GM12878 (cell line): ENCODE measurements at regions of chr16 and their contacts with region 1.

Region 1: DNA sequence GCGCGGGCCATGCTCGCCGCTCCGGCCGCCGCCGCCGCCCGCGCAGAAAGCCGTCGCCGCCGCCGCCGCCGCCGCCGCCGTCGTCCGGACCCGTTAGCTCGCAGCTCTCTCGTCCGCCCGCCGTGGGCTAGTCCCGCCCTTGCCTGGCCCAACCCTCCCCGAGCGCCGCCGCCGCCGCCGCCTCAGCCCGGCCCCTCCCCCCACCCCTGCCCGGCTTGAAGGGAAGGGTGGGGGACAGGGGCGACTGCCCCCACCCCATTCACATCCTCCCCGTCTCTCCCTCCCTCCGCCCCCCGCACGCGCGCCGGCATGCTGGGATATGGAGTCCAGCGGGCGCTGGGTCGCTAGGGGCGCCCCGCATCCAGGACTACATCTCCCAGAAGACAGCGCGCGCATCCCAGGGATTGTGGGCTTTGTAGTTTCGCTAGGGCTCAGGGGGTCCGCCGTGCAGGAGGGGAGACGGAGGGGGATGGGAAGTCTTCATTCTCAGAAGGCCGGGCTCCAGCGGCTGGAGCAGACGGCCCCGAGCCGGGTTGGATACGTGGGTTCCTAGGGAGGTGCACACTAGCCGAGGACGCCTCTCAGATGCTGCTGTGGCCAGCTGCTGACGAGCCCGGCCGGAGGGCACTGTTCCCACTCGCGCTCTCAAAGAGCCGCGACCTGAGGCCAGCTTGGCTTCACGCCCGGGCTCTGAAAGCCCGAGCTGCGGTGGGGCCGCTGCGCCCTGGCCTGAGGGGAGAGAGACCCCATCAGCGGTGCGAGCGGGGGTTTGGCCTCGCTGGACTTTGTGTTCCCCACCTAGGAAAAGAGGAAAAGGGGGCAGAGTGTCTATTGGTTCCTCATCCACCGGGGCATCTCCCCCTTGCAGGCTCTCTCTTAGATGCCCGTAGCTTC is at the start of gene ST3GAL2:
- DNase-seq: peak; percentile 74
- ATAC-seq: peak; percentile 91
- H3K4me3 ChIP-seq: peak within 1 kb of the TSS; percentile 88
- H3K27ac ChIP-seq: peak within 1 kb of the TSS; percentile 71
- H3K4me1 ChIP-seq: peaks cover 20% of the 10 kb centered on the region
- H3K27me3 ChIP-seq: no peaks in the 10 kb centered on the region
- CTCF ChIP-seq: 0 out of 6 replicates have a peak, but pooled peaks of 1 of the 3 experiments have one; percentile 2
- EP300 ChIP-seq: no peak
- POLR2A ChIP-seq: peak; percentile 67
- RAD21 ChIP-seq: no peak
- polyA plus RNA-seq, gene ST3GAL2: 0.95 to 1.4 TPM

Region 2: GRCh38 chr16:70402916-70403659 is 36.1 kb before region 1 on chr16:
- CTCF ChIA-PET with region 1: interaction called, 10 read pairs
- POLR2A ChIA-PET with region 1: interaction called, 17 read pairs
- RAD21 ChIA-PET with region 1: interaction called, 26 read pairs
- SMC1A ChIA-PET with region 1: interaction called, 37 read pairs
- in situ Hi-C with region 1: no loop called
- intact Hi-C with region 1: no loop called
- DNase-seq: no peak
- ATAC-seq: no peak
- H3K4me3 ChIP-seq: no peak overlapping the region
- H3K27ac ChIP-seq: peak overlapping the region; percentile 84
- H3K4me1 ChIP-seq: peaks cover 43% of the 10 kb centered on the region
- H3K27me3 ChIP-seq: no peaks in the 10 kb centered on the region; a peak in 1 of 4 replicates
- CTCF ChIP-seq: no peak
- EP300 ChIP-seq: no peak
- POLR2A ChIP-seq: no peak
- RAD21 ChIP-seq: no peak

Region 3: DNA sequence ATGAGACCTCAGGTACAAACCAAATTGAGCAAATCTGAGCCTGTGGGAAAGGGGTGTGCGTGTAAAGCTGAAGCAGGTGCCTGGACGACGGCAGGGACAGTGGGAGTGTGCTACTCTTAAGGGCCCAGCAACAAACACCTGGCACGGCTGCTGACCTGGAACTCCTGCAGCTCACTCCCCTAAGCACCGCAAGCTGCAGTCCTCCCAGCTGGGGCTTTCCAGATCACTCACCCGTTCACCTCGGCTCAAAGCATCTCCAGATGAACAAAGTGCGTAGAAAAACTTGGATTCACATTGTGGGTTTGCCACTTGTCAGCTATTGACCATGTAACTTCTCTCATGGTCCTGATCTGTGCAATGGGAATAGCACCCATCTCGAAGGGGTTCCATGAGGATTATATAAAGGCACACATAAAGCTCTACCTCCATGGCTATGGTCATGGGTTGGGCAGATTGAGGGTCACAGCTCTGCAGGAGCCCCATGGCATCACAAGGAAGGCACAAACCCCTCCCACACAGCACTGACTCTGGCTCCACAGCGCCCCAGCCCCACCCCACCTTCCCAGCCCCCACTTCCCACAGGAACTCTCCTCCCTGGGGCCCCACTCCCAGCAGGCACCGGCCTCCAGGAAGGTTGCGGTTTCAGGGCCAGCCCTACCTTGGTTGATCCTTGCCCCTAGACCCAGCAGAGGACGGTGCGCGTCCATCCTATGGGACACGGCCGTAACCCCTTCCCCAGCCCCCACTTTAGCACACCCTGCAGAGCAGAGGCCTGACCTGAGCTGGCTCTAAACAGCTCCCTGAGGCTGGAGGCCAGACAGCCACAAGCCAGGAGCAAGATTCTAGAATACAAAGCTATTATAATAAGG is 22.2 kb before region 1 on chr16:
- CTCF ChIA-PET with region 1: interaction called, 9 read pairs
- POLR2A ChIA-PET with region 1: interaction called, 24 read pairs
- RAD21 ChIA-PET with region 1: interaction called, 6 read pairs
- SMC1A ChIA-PET with region 1: interaction called, 20 read pairs
- in situ Hi-C with region 1: no loop called
- intact Hi-C with region 1: no loop called
- DNase-seq: no peak
- ATAC-seq: peak; percentile 95
- H3K4me3 ChIP-seq: no peak overlapping the region
- H3K27ac ChIP-seq: peak overlapping the region; percentile 87
- H3K4me1 ChIP-seq: peaks cover 50% of the 10 kb centered on the region
- H3K27me3 ChIP-seq: no peaks in the 10 kb centered on the region
- CTCF ChIP-seq: no peak
- EP300 ChIP-seq: peak; percentile 60 to 69; a peak in 2 of 4 replicates
- POLR2A ChIP-seq: 0 out of 2 replicates have a peak, but pooled peaks have one; percentile 20
- RAD21 ChIP-seq: no peak

Region 4: DNA sequence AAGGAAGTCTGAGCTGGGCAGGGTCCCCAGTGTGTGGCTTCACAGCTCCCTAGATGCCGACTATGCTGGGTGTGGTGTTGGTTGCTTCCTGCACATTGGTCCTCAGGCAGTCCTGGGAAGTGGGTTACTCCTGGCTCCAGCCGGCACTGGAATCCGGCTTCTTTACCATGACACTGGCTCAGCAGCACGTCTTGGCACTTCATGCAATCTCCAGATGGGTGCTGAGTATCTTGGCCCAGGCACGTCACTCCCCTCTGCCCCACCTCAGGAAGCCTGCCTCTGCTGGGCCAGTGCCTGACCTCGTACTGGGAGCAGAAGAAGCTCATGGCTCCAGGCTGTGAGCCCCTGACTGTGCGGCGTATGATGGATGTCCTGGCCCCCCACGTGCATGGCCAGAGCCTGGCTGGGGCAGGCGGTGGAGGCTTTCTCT is 39.7 kb after region 1 on chr16:
- CTCF ChIA-PET with region 1: interaction called, 3 read pairs
- POLR2A ChIA-PET with region 1: interaction called, 11 read pairs
- RAD21 ChIA-PET with region 1: interaction called, 13 read pairs
- SMC1A ChIA-PET with region 1: interaction called, 11 read pairs
- in situ Hi-C with region 1: no loop called
- intact Hi-C with region 1: loop called (anchors 2 kb)
- DNase-seq: no peak
- ATAC-seq: no peak
- H3K4me3 ChIP-seq: no peak overlapping the region
- H3K27ac ChIP-seq: no peak overlapping the region
- H3K4me1 ChIP-seq: peaks cover 35% of the 10 kb centered on the region
- H3K27me3 ChIP-seq: no peaks in the 10 kb centered on the region
- CTCF ChIP-seq: no peak
- EP300 ChIP-seq: no peak
- POLR2A ChIP-seq: 0 out of 2 replicates have a peak, but pooled peaks have one; percentile 4
- RAD21 ChIP-seq: no peak

Region 5: GRCh38 chr16:70703041-70703834 is 264.0 kb after region 1 on chr16:
- CTCF ChIA-PET with region 1: no interaction called
- POLR2A ChIA-PET with region 1: no interaction called
- RAD21 ChIA-PET with region 1: no interaction called
- SMC1A ChIA-PET with region 1: no interaction called
- in situ Hi-C with region 1: no loop called
- intact Hi-C with region 1: no loop called
- DNase-seq: no peak
- ATAC-seq: no peak
- H3K4me3 ChIP-seq: no peak overlapping the region
- H3K27ac ChIP-seq: no peak overlapping the region
- H3K4me1 ChIP-seq: no peaks in the 10 kb centered on the region
- H3K27me3 ChIP-seq: no peaks in the 10 kb centered on the region
- CTCF ChIP-seq: no peak
- EP300 ChIP-seq: no peak
- POLR2A ChIP-seq: no peak
- RAD21 ChIP-seq: no peak